Activated CD4-positive, alpha-beta memory T cell treated with anti-CD3 and anti-CD28 coated beads for 36 hours (primary cell): ENCODE measurements at regions of chr1 and their contacts with region 1.

Region 1: GRCh38 chr1:169601093-169601881 is 15.0 kb upstream of the F5 start:
- DNase-seq: no peak
- H3K4me3 Mint-ChIP-seq: peak overlapping the region; percentile 7
- H3K27ac Mint-ChIP-seq: peak overlapping the region; percentile 48
- H3K4me1 Mint-ChIP-seq: peaks cover 51% of the 10 kb centered on the region
- H3K27me3 Mint-ChIP-seq: no peaks in the 10 kb centered on the region

Region 2: DNA sequence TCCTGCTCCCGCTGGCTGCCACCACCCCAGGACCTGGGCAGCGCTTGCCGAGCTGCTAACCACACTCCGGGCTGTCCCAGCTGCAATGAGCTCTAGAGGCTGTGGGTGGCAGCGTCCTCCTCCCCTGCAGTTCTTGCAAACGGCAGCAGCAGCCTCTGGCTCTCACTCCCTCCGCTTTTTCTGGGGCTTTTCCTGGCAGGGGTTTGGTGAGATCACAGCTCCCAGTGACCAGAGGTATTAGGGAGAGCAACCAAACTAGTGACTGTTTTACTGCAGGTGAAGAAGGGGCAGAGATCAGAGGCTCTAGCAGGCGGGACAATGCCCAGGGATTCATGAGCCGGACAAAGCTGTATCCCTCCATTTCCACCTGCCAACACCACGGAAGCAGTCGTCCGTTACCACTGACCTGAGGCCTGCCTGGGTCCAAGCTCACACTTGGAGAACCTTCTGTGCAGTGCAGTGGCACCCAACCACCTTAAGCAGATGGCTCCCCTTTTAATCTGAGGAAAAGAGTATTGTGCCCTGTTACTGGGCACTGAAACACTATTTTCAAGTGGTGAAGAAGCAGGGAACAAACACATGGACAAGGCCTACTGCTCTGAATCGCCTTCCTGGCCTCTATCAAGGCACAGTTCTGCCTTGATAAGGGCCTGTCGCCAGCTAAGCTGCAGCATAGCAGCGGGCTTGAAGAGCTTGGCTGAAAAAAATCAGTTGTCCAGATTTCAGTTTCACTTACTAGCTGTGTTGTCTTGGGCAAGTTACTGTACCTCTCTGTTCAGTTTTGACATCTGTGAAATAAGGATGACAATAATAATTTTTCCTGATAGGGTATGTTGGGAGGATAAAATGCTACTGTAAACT is 14.7 kb before region 1 on chr1 and contains the start of gene F5:
- CTCF ChIA-PET with region 1: interaction called, 43 read pairs
- POLR2A ChIA-PET with region 1: interaction called, 8 read pairs
- intact Hi-C with region 1: loop called (anchors 1 kb)
- DNase-seq: peak; percentile 90
- H3K4me3 Mint-ChIP-seq: peak within 1 kb of the TSS; percentile 96
- H3K27ac Mint-ChIP-seq: peak within 1 kb of the TSS; percentile 94
- H3K4me1 Mint-ChIP-seq: peaks cover 61% of the 10 kb centered on the region
- H3K27me3 Mint-ChIP-seq: no peaks in the 10 kb centered on the region
- total RNA-seq, gene F5: 50.8 to 51.1 TPM

Region 3: GRCh38 chr1:169623132-169623926 is 22.0 kb after region 1 on chr1:
- CTCF ChIA-PET with region 1: interaction called, 7 read pairs
- POLR2A ChIA-PET with region 1: no interaction called
- intact Hi-C with region 1: loop called (anchors 2 kb)
- DNase-seq: no peak
- H3K4me3 Mint-ChIP-seq: no peak overlapping the region
- H3K27ac Mint-ChIP-seq: peak overlapping the region; percentile 57
- H3K4me1 Mint-ChIP-seq: peaks cover 39% of the 10 kb centered on the region
- H3K27me3 Mint-ChIP-seq: no peaks in the 10 kb centered on the region

Region 4: DNA sequence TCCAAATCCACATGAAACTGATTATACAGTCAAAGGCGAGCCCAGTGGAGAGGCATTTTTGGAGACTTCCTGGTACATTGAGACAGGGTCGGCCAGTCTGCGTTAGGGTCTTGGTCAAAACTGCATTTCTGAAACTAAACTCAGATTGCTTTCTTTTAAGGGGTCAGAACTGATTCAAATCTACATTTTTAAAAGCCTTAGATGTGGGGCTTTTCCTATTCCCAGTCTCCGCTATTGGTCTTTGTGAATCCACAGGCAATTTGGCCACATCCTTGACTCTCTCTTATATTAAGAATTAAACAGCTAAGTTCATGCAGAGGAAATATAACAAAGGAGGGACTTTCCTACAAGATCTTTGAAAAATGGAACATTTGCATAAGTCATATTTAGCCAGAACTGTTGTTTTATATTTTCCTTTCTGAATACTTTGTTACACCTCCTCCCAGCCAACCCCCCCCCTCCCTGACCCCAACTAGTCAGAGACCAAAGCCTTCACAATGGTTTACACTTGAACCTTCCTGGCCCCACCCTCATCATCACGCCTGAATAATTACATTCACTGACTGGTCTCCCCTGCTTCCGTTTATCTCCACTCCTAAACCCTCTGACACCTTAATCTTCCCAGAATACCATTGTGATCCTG is 79.2 kb after region 1 on chr1:
- CTCF ChIA-PET with region 1: interaction called, 17 read pairs
- POLR2A ChIA-PET with region 1: no interaction called
- intact Hi-C with region 1: no loop called
- DNase-seq: peak; percentile 80
- H3K4me3 Mint-ChIP-seq: peak overlapping the region; percentile 46
- H3K27ac Mint-ChIP-seq: peak overlapping the region; percentile 90
- H3K4me1 Mint-ChIP-seq: peaks cover 62% of the 10 kb centered on the region
- H3K27me3 Mint-ChIP-seq: no peaks in the 10 kb centered on the region

Region 5: DNA sequence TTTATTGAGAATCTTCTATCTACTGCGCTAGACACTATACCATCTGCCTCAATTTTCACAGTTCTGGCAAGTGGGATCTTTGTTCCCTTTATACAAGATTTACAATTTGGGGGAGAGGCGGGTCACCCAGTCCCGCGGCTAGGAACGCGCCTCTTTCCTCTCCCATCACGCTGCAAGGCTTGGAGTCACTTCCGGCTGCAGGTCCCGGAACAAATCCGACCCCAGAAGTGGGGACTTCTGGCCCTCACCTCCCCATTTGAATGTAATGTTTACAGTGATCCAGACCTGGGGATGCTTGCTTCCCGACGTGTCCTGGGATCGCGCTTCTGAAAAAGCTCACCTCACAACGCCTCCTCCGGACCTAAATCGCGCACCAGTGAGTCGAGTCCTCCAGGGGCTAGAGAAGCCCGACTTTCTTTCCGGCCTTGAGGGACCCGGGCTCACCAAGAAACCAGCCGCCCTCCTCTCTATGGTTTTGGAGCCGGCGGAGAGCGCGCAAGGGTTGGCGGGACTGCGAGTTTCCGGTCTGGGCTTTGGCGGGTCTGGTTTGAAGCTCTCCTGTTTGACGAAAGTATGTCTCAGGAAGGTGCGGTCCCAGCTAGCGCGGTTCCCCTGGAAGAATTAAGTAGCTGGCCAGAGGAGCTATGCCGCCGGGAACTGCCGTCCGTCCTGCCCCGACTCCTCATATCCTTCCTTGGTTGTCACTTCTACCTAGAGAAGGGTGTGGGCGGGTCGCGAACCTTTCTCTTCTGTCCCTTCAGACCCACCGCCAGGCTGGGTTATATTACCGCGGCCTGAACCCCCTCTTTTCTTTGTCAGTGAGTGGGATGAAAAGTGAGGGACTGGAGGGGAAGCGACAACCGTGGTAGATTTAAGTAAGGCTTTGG is 193.5 kb after region 1 on chr1 and contains the start of gene METTL18:
- CTCF ChIA-PET with region 1: interaction called, 11 read pairs
- POLR2A ChIA-PET with region 1: no interaction called
- intact Hi-C with region 1: loop called (anchors 1 kb)
- DNase-seq: peak; percentile 96
- H3K4me3 Mint-ChIP-seq: peak within 1 kb of the TSS; percentile 100
- H3K27ac Mint-ChIP-seq: peak within 1 kb of the TSS; percentile 99
- H3K4me1 Mint-ChIP-seq: peaks cover 44% of the 10 kb centered on the region
- H3K27me3 Mint-ChIP-seq: no peaks in the 10 kb centered on the region
- total RNA-seq, gene METTL18: 10.8 to 10.9 TPM